Activated CD4-positive, alpha-beta T cell treated with anti-CD3 and anti-CD28 coated beads for 36 hours (primary cell): ENCODE measurements at regions of chr17 and their contacts with region 1.

Region 1: DNA sequence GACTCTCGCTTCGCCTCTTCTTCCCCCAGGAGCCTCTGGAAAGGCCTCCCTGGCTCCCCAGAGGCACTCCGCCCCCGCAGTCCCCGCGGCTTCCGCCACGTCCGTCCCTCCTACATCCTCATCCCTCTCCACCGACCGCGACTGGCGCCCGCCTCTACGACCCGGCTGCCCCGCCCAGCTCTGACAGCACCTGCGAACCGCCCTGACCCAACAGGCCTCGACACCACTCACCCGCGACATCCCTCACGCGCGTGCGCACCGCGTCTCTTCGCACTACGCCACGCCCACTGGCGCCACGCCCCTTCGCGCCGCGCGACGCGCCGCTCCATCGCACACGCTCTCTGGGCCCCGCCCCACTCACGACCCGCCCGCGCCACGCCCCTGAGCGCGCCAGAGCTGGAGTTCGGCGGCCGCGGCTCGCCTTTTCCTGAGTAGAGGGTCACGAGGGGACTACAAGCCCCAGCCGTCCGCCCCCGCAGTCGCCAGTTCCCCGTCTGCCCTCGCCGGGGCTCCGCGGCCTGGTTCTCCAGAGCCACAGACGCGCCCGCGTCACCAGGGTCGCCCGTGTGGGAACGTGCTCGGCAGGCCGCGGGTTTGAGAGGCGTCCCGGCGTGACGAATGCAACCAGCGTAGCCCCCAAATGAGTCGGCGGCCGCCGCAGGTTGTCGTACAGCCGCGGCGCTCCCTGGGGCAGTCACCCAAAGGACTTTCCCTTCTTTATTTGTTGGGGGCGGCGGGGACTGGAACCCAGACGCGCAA is 56.2 kb upstream of the LRRC37A3 start:
- DNase-seq: peak; percentile 97
- ATAC-seq: peak; percentile 80
- H3K4me3 Mint-ChIP-seq: peak overlapping the region; percentile 81
- H3K27ac Mint-ChIP-seq: peak overlapping the region; percentile 98
- H3K4me1 Mint-ChIP-seq: peaks cover 59% of the 10 kb centered on the region
- H3K27me3 Mint-ChIP-seq: no peaks in the 10 kb centered on the region

Region 2: GRCh38 chr17:65039336-65039988 is 64.0 kb after region 1 on chr17:
- CTCF ChIA-PET with region 1: interaction called, 6 read pairs
- POLR2A ChIA-PET with region 1: interaction called, 4 read pairs
- intact Hi-C with region 1: loop called in 1 of 2 experiments (anchors 1 kb)
- DNase-seq: peak; percentile 65
- ATAC-seq: peak; percentile 90
- H3K4me3 Mint-ChIP-seq: peak overlapping the region; percentile 54
- H3K27ac Mint-ChIP-seq: peak overlapping the region; percentile 99
- H3K4me1 Mint-ChIP-seq: peaks cover 84% of the 10 kb centered on the region
- H3K27me3 Mint-ChIP-seq: no peaks in the 10 kb centered on the region

Region 3: DNA sequence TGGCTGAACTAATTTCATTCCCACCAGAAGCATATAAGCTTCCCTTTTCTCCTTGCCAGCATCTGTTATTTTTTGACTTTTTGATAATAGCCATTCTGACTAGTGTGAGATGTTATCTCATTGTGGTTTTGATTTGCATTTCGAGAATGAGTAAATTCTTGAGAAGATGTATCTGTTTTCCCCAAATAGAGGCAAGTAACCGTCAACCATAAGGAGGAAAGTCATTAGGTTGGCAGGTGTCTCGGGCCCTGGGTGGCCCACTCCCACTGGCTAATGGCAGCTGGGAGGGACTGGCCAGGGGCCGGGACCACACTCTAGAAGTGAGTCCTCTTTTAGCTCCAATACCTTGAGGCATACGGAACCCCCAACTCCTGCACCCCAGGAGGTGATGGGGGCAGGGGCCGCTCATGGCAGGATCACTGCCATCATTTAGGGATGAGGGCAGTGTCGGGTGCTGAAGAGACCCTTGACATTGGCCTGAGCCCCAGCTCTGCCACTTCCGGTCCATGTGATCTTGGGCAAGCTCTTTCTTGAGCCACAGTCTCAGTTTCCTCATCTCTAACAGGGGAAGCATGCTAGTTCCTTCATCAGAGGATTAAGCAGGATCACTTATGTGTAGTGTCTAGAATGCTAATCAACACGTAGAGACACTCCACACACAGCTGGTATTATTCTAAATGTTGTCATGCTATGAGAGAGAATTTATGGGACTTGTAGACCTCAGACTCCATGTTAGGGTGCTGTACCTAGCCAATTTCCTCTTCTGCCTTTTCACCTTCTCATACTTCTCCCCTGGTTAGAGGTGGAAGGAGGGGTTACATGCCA is 205.9 kb after region 1 on chr17:
- CTCF ChIA-PET with region 1: no interaction called
- POLR2A ChIA-PET with region 1: no interaction called
- intact Hi-C with region 1: loop called in 1 of 2 experiments (anchors 2 kb)
- DNase-seq: peak; percentile 71
- ATAC-seq: peak; percentile 77
- H3K4me3 Mint-ChIP-seq: no peak overlapping the region
- H3K27ac Mint-ChIP-seq: peak overlapping the region; percentile 75
- H3K4me1 Mint-ChIP-seq: peaks cover 54% of the 10 kb centered on the region
- H3K27me3 Mint-ChIP-seq: peaks cover 9% of the 10 kb centered on the region

Region 4: DNA sequence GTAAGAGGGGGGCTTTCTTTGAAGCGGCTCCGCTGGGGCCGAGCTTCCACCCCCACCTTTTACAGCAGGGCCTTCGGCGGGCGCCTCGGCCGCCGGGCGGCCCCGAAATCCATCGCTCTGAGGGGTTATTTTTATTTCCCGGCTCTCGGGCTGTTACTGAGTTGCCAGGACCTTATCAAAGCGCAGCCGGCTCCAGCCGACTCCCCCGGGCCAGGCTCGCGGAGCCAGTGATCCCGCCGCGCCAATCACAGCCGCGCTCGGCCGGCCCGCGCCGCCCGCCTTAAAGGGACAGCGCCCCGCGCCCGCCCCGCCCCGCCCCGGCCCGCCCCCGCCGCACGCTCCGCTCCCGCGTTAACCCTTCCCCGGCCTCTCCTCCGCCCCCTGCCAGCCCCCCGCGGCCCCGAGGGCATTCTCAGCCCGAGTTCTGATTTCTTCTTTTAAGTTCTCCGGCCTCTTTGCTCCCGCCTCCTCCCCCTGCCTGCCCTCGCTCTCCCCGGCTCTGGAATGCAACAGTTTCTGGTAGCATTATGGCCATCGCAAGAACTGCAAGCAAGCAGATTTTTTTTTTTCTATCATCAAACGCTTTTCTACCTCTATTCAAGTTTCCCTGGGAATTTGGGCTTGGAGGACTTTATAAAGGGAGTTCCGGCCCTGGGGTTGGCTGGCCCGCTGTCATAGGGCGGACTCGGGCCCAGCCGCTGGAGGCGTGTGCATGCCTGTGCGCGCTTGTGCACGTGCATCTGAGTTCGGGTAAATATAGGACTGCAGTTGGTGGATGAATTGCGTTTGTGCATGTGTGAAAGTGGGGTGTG is 586.1 kb after region 1 on chr17 and contains the start of gene AXIN2:
- CTCF ChIA-PET with region 1: no interaction called
- POLR2A ChIA-PET with region 1: no interaction called
- intact Hi-C with region 1: loop called in 1 of 2 experiments (anchors 2 kb)
- DNase-seq: peak; percentile 92
- ATAC-seq: peak; percentile 82
- H3K4me3 Mint-ChIP-seq: no peak within 1 kb of the TSS
- H3K27ac Mint-ChIP-seq: peak within 1 kb of the TSS; percentile 51
- H3K4me1 Mint-ChIP-seq: peaks cover 28% of the 10 kb centered on the region
- H3K27me3 Mint-ChIP-seq: peaks cover 4% of the 10 kb centered on the region
- total RNA-seq, gene AXIN2: 2.6 to 3.0 TPM